Caco-2 (cell line): ENCODE measurements at regions of chr20 and their contacts with region 1.

Region 1: DNA sequence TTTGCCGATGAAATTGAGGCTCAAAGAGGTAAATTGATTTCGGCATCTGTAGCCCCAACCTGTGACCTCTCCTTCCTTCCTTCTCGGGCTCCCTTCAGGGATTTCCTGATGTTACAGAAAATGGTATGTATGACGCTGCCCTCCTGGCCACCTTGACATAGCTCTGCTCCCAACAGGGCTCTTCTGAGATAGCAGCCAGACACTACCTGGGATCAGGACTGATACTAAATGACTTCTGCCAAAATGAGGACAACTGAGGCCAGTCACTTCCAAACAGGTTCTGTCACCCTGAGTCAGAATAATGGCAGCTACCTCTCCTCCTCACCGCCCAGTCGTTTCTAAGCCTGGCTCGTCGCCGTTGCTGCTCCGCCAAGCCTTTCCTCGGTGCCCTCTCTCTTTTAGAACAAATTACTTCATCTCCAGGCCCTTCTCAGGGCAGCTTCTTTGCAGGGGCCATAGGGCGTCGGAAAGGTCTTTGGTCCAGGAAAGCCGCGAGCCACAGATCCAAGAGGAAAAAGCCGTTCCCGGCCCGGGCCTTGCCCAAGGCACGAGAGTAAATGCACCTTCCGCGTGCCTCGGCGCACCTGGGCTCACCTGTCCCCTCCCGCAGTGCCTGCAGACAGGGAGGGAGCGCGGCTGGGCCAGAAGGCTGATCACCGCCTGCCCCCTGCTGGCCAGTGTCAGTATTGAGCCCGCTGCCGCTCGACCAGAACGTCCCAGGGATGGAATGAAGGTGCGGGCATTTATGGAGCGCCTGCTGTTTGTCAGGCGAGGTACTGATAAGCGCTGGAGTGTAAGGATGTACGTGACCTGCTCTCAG is 904 bp upstream of the LPIN3 start:
- DNase-seq: peak; percentile 98 to 100
- H3K4me3 ChIP-seq: peak overlapping the region; percentile 51
- H3K4me3 Mint-ChIP-seq: peak overlapping the region; percentile 96
- H3K27ac Mint-ChIP-seq: peak overlapping the region; percentile 69
- H3K4me1 ChIP-seq: peaks cover 25% of the 10 kb centered on the region
- H3K4me1 Mint-ChIP-seq: peaks cover 21% of the 10 kb centered on the region
- H3K27me3 ChIP-seq: no peaks in the 10 kb centered on the region
- H3K27me3 Mint-ChIP-seq: no peaks in the 10 kb centered on the region
- CTCF ChIP-seq: peak; percentile 99 to 100

Region 2: DNA sequence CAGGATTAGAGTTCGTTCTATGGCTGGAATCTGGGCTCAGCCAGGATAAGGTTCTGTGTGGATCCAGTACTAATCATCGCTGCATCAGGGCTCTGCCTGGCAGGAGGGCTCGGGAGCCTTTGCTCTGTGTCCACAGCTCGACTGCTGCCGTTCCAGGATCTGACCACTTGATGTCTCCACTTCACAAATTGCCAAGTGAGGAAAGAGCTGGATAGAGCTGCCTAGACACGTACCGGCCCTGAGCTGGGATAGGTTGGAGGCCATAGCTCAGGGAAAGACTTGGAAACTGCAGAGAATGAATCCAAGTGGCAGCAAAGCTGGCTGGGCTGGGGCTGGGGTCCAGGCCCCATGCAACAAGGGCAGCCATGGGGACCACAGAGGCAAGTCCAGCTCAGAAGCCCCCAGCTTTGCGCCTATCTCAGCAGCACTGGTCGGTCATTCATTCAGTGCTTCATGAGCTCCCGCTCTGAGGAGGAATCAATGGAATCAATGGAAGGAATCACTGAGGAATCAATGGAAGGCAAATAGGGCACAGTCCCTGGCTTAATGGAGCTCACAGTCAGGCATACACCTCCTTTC is 349.1 kb before region 1 on chr20:
- CTCF ChIA-PET with region 1: interaction called, 16 read pairs
- POLR2A ChIA-PET with region 1: no interaction called
- intact Hi-C with region 1: no loop called
- DNase-seq: peak; percentile 95
- H3K4me3 ChIP-seq: no peak overlapping the region
- H3K4me3 Mint-ChIP-seq: no peak overlapping the region
- H3K27ac Mint-ChIP-seq: peak overlapping the region; percentile 62
- H3K4me1 ChIP-seq: peaks cover 12% of the 10 kb centered on the region
- H3K4me1 Mint-ChIP-seq: peaks cover 17% of the 10 kb centered on the region
- H3K27me3 ChIP-seq: no peaks in the 10 kb centered on the region
- H3K27me3 Mint-ChIP-seq: no peaks in the 10 kb centered on the region
- CTCF ChIP-seq: peak; percentile 96 to 99

Region 3: DNA sequence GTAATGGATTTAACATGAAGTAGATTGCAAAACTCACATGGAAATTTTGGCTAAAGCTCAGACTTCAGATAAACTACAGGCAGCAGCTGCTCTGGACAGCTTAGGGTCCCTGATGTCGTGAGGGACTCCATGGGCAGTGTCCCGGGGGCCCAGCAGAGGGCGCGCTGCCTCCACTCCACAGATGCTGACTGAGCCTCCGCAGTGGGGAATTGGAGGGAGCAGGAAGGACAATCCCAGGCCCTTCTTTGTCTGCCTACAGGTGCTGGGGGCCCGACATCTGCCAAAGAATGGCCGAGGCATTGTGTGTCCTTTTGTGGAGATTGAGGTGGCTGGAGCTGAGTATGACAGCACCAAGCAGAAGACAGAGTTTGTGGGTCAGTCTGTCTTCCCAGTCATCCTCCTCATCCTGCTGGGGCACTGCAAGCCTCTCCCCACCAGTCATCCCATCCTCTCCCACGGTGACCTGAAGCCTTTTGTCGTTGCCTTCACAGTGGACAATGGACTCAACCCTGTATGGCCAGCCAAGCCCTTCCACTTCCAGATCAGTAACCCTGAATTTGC is 166.5 kb before region 1 on chr20:
- CTCF ChIA-PET with region 1: interaction called, 185 read pairs
- POLR2A ChIA-PET with region 1: interaction called, 10 read pairs
- intact Hi-C with region 1: loop called (anchors 1 kb)
- DNase-seq: peak; percentile 85 to 94
- H3K4me3 ChIP-seq: no peak overlapping the region
- H3K4me3 Mint-ChIP-seq: no peak overlapping the region
- H3K27ac Mint-ChIP-seq: no peak overlapping the region
- H3K4me1 ChIP-seq: no peaks in the 10 kb centered on the region
- H3K4me1 Mint-ChIP-seq: no peaks in the 10 kb centered on the region
- H3K27me3 ChIP-seq: no peaks in the 10 kb centered on the region
- H3K27me3 Mint-ChIP-seq: no peaks in the 10 kb centered on the region
- CTCF ChIP-seq: peak; percentile 99 to 100

Region 4: GRCh38 chr20:41329435-41330342 is 10.0 kb before region 1 on chr20:
- CTCF ChIA-PET with region 1: interaction called, 13 read pairs
- POLR2A ChIA-PET with region 1: interaction called, 3 read pairs
- intact Hi-C with region 1: no loop called
- DNase-seq: peak in 1 of 2 experiments; percentile 51
- H3K4me3 ChIP-seq: no peak overlapping the region
- H3K4me3 Mint-ChIP-seq: no peak overlapping the region
- H3K27ac Mint-ChIP-seq: peak overlapping the region; percentile 5
- H3K4me1 ChIP-seq: peaks cover 8% of the 10 kb centered on the region
- H3K4me1 Mint-ChIP-seq: peaks cover 16% of the 10 kb centered on the region
- H3K27me3 ChIP-seq: no peaks in the 10 kb centered on the region
- H3K27me3 Mint-ChIP-seq: no peaks in the 10 kb centered on the region
- CTCF ChIP-seq: no peak

Region 5: DNA sequence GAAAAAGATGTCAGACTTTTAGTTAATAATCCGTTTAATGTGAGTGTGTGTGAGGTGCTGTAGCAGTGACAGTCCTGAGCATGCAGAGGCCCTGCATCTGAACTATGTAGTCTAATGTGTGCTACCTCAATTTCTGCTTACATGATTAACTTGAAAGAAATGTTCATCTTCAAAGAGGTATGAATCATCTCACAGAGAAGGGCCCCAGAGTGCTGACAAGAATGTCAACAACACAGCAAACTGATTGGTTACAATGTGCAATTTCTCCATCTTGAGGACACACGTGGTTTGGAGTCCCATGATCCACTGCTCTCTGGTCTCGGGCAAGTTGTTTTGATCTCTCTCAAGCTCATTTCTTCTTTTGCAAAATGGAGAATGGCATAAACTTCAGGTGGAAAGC is 88.6 kb after region 1 on chr20:
- CTCF ChIA-PET with region 1: interaction called, 19 read pairs
- POLR2A ChIA-PET with region 1: interaction called, 4 read pairs
- intact Hi-C with region 1: no loop called
- DNase-seq: peak; percentile 72 to 73
- H3K4me3 ChIP-seq: no peak overlapping the region
- H3K4me3 Mint-ChIP-seq: peak overlapping the region; percentile 25
- H3K27ac Mint-ChIP-seq: peak overlapping the region; percentile 36
- H3K4me1 ChIP-seq: peaks cover 30% of the 10 kb centered on the region
- H3K4me1 Mint-ChIP-seq: peaks cover 26% of the 10 kb centered on the region
- H3K27me3 ChIP-seq: no peaks in the 10 kb centered on the region
- H3K27me3 Mint-ChIP-seq: no peaks in the 10 kb centered on the region
- CTCF ChIP-seq: no peak

Region 6: DNA sequence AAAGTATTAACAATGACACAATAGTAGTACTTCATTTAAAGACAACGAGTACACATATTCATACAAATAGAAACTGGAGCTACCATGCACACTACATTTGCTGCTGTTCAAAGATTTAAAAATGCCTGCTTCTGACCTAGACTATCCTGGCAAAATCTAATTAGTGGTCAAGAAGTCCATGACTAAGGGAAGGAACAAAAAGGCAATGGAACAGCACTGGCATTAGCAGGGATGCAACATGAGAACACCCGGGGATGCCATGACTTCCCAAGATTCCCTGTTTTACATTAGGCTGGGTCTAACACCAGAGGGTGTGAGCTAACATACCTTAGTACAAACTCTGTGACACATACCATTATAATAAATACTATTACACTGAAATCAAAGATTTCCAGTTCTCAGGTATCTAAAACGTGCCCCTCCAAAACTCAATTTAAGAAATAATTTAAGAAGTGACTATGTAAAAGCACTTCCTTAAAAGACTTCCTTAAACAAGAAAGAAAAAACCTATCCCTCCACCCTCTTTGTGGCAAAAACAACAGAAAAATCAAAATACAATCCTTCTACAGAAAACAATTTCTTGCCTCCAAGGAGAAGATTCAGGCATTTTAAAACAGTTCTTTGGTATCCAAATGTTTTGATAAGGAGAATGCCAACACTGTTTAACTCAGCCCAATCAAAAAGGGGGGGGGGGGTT is 253.0 kb after region 1 on chr20:
- CTCF ChIA-PET with region 1: no interaction called
- POLR2A ChIA-PET with region 1: interaction called, 12 read pairs
- intact Hi-C with region 1: no loop called
- DNase-seq: no peak
- H3K4me3 ChIP-seq: no peak overlapping the region
- H3K4me3 Mint-ChIP-seq: no peak overlapping the region
- H3K27ac Mint-ChIP-seq: no peak overlapping the region
- H3K4me1 ChIP-seq: no peaks in the 10 kb centered on the region
- H3K4me1 Mint-ChIP-seq: peaks cover 7% of the 10 kb centered on the region
- H3K27me3 ChIP-seq: no peaks in the 10 kb centered on the region
- H3K27me3 Mint-ChIP-seq: no peaks in the 10 kb centered on the region
- CTCF ChIP-seq: no peak

Region 7: GRCh38 chr20:42429761-42430458 is 1090.2 kb after region 1 on chr20:
- CTCF ChIA-PET with region 1: interaction called, 12 read pairs
- POLR2A ChIA-PET with region 1: no interaction called
- intact Hi-C with region 1: no loop called
- DNase-seq: no peak
- H3K4me3 ChIP-seq: no peak overlapping the region
- H3K4me3 Mint-ChIP-seq: no peak overlapping the region
- H3K27ac Mint-ChIP-seq: no peak overlapping the region
- H3K4me1 ChIP-seq: no peaks in the 10 kb centered on the region
- H3K4me1 Mint-ChIP-seq: no peaks in the 10 kb centered on the region
- H3K27me3 ChIP-seq: no peaks in the 10 kb centered on the region
- H3K27me3 Mint-ChIP-seq: peaks cover 21% of the 10 kb centered on the region
- CTCF ChIP-seq: no peak